SK-N-SH (cell line): ENCODE measurements at regions of chr17 and their contacts with region 1.

Region 1: DNA sequence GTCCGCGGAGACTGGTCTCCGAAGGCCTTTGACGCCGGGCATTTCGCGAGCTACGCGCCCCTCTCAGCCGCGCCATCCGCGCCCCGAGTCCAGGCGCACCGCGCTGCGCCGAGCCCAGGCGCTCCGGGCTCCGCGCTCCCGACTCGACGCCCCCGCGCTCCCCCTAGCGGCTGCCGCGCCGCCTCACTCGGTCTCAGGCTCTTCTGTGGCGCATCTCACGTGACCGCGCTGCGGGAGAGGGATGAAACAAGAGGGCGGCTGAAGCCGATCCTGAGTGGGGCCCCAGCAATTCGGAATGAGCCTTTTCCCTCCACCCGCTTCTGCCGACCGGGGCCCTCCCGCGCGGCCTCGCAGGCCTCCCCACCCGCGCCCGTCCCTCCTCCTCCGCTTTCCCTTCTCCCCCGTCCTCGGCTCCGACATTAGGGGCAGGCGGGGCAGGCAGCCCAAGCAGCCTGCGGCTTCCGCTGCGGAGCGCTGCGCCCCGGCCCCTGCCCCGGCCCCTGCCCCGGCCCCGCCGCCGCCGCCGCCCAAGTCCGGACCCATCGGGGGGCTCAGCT is 42.5 kb upstream of the AMZ2 start:
- DNase-seq: peak; percentile 97
- H3K4me3 ChIP-seq: peak overlapping the region; percentile 78 to 84
- H3K27ac ChIP-seq: peak overlapping the region; percentile 56 to 85; a peak in 3 of 4 replicates
- H3K4me1 ChIP-seq: peaks cover 0 to 15% of the 10 kb centered on the region in 2 experiments; a peak in 2 of 4 replicates
- H3K27me3 ChIP-seq: peaks cover 10% of the 10 kb centered on the region
- CTCF ChIP-seq: peak; percentile 97
- EP300 ChIP-seq: peak in 1 of 2 experiments; percentile 45; a peak in 1 of 4 replicates
- RAD21 ChIP-seq: peak; percentile 52

Region 2: GRCh38 chr17:68085767-68086381 is 119.5 kb before region 1 on chr17:
- CTCF ChIA-PET with region 1: no interaction called
- POLR2A ChIA-PET with region 1: no interaction called
- DNase-seq: no peak
- H3K4me3 ChIP-seq: no peak overlapping the region
- H3K27ac ChIP-seq: no peak overlapping the region
- H3K4me1 ChIP-seq: no peaks in the 10 kb centered on the region
- H3K27me3 ChIP-seq: no peaks in the 10 kb centered on the region
- CTCF ChIP-seq: no peak
- EP300 ChIP-seq: no peak
- RAD21 ChIP-seq: no peak

Region 3: DNA sequence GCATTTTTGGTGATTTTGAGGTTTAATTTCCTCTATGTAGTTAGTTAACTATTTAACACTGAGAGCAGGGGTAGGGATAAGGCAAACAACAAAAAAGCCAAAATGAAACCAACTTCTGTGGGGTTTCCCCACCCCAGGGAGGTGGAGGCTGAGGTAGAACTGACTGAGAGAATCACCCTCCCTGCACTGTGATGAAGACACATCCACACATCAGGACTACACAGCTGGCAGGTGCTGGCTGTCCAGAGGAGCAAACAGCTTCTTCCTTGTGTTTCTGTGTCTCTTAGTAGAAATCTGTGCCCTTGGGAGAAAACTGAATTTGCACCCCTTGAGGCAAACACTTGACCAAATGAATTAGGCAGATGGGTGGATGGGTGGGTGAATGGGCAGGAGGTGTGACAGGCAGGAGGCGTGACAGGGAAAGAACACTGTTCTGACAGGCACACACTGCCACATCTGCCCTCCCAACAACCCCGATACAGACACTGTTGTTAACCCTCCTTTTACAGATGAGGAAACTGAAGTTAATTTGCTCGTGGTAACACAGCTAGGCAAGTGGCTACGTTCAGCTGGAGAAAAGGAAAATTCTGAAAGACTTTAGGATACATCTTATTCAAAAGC is 20.4 kb before region 1 on chr17:
- CTCF ChIA-PET with region 1: interaction called, 113 read pairs
- POLR2A ChIA-PET with region 1: no interaction called
- DNase-seq: no peak
- H3K4me3 ChIP-seq: no peak overlapping the region
- H3K27ac ChIP-seq: no peak overlapping the region
- H3K4me1 ChIP-seq: no peaks in the 10 kb centered on the region
- H3K27me3 ChIP-seq: no peaks in the 10 kb centered on the region
- CTCF ChIP-seq: no peak
- EP300 ChIP-seq: no peak
- RAD21 ChIP-seq: no peak

Region 4: DNA sequence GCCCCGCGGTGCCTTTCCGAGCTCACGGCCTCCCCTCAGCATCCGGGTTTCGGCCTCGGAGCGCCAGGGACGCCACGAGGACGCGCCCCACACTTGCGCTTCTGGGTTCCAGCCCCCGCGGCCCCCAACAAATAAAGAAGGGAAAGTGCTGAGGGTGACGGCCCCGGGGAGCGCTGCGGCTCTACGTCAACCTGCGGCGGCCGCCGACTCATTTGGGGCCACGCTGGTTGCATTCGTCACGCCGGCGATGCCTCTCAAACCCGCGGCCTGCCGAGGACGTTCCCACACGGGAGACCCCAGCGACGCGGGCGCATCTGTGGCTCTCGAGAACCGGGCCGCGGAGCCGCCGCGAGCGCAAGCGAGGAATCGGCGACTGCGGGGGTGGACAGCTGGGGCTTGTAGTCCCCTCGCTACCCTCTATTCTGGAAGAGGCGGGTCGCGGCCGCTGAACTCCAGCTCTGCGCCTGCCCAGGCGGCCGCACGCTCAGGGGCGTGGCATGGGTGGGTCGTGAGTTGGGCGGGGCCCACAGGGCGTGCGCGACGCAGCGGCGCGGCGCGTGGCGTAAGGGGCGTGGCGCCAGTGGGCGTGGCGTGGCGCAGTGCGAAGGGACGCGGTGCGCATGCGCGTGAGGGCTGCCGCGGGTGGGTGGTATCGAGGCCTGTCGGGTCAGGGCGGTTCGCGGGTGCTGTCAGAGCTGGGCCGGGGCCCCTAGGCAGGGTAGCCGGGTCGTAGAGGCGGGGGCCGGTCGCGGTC is 42.3 kb after region 1 on chr17 and contains the start of gene AMZ2:
- CTCF ChIA-PET with region 1: interaction called, 18 read pairs
- POLR2A ChIA-PET with region 1: interaction called, 12 read pairs
- DNase-seq: peak; percentile 99
- H3K4me3 ChIP-seq: peak within 1 kb of the TSS; percentile 76 to 79
- H3K27ac ChIP-seq: peak within 1 kb of the TSS; percentile 79 to 89
- H3K4me1 ChIP-seq: peaks cover 6 to 8% of the 10 kb centered on the region in 2 experiments; a peak in 2 of 4 replicates
- H3K27me3 ChIP-seq: no peaks in the 10 kb centered on the region
- CTCF ChIP-seq: no peak
- EP300 ChIP-seq: no peak
- RAD21 ChIP-seq: no peak
- polyA plus RNA-seq, gene AMZ2: 95.9 and 115 TPM in 2 replicates

Region 5: GRCh38 chr17:68327823-68328570 is 122.7 kb after region 1 on chr17:
- CTCF ChIA-PET with region 1: no interaction called
- POLR2A ChIA-PET with region 1: no interaction called
- DNase-seq: no peak
- H3K4me3 ChIP-seq: no peak overlapping the region
- H3K27ac ChIP-seq: no peak overlapping the region
- H3K4me1 ChIP-seq: no peaks in the 10 kb centered on the region
- H3K27me3 ChIP-seq: no peaks in the 10 kb centered on the region
- CTCF ChIP-seq: no peak
- EP300 ChIP-seq: no peak
- RAD21 ChIP-seq: no peak

Region 6: DNA sequence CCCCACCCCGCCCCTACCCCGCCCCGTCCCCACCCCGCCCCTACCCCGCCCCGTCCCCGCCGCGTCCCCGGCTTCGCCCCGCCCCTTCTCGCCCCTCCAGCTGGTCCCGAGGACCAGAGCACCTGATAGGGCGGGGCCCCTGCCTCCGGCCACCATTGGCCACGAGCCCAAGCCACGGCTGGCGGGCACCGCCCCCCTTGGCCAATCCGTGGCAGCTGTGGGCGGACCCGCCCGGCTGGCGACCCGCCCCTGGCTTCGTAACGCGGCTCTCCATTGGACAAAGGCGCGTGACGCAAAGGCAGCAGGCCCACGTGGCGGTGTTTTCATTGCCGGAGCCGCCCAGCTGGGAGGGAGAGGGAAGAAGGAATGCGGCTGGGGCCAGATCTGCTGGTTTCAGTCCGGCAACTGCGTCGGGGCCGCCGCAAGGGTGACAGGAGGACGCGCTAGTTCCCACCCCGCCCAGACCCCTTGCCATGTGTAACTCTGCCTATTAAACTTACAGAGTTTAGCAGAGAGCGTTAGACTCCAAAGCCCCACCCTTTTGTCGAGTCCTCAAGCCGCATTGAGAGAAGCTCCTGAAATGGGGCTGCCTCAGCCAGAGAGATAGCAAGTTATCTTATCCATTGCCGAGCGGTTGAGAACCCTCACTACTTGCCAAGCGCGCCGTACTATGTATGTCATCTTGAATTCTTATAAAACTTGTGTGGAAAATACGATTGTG is 252.4 kb after region 1 on chr17:
- CTCF ChIA-PET with region 1: interaction called, 10 read pairs
- POLR2A ChIA-PET with region 1: interaction called, 3 read pairs
- DNase-seq: peak; percentile 100
- H3K4me3 ChIP-seq: peak overlapping the region; percentile 77 to 93
- H3K27ac ChIP-seq: peak overlapping the region in 1 of 2 experiments; percentile 18; a peak in 1 of 4 replicates
- H3K4me1 ChIP-seq: peaks cover 8 to 23% of the 10 kb centered on the region in 2 experiments; a peak in 3 of 4 replicates
- H3K27me3 ChIP-seq: no peaks in the 10 kb centered on the region
- CTCF ChIP-seq: no peak
- EP300 ChIP-seq: no peak
- RAD21 ChIP-seq: no peak